Heart left ventricle (tissue), 16 donors: ENCODE measurements at regions of chr20 and their contacts with region 1.

Region 1: GRCh38 chr20:44196271-44196670 is 9.3 kb upstream of the JPH2 start:
- DNase-seq: no peak
- ATAC-seq: no peak
- H3K4me3 ChIP-seq: no peak overlapping the region
- H3K27ac ChIP-seq: no peak overlapping the region
- H3K4me1 ChIP-seq: peaks cover 0 to 20% (median 8%) of the 10 kb centered on the region in 12 donors
- H3K27me3 ChIP-seq: no peaks in the 10 kb centered on the region
- CTCF ChIP-seq: no peak
- POLR2A ChIP-seq: no peak

Region 2: GRCh38 chr20:44001667-44002596 is 194.3 kb before region 1 on chr20:
- intact Hi-C with region 1: no loop called
- DNase-seq: peak in 1 of 5 donors; percentile 2
- ATAC-seq: peak in 2 of 4 donors; percentile 34 to 40
- H3K4me3 ChIP-seq: no peak overlapping the region
- H3K27ac ChIP-seq: no peak overlapping the region
- H3K4me1 ChIP-seq: peaks cover 0 to 5% (median 0%) of the 10 kb centered on the region in 12 donors
- H3K27me3 ChIP-seq: peaks cover 0 to 9% (median 0%) of the 10 kb centered on the region in 9 donors
- CTCF ChIP-seq: no peak
- POLR2A ChIP-seq: no peak

Region 3: DNA sequence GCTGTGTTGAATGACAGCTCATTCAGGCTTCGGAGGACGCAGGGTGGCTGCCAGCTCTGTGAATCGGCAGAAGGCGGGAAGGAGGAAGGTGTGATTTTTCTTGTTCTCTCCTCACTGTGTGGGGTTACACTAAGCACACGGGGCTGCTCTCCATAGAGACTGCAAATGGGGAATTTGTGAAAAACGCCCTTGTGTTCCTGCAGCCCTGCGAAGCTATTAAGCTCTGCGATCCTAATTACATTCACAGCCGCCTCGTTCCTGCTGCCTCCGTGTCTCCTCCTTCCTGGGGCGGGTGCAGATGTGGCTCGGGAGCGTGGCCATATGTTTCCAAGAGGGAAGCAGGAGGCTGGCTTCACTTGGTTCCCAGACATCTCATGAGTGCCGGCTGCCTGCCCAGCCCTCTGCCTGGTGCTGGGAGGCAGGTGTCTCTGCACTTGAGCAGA is 157.6 kb before region 1 on chr20:
- intact Hi-C with region 1: no loop called
- DNase-seq: peak in 1 of 5 donors; percentile 21
- ATAC-seq: no peak
- H3K4me3 ChIP-seq: no peak overlapping the region
- H3K27ac ChIP-seq: no peak overlapping the region
- H3K4me1 ChIP-seq: peaks cover 0 to 3% (median 0%) of the 10 kb centered on the region in 12 donors
- H3K27me3 ChIP-seq: peaks cover 0 to 32% (median 8%) of the 10 kb centered on the region in 9 donors
- CTCF ChIP-seq: no peak
- POLR2A ChIP-seq: no peak

Region 4: DNA sequence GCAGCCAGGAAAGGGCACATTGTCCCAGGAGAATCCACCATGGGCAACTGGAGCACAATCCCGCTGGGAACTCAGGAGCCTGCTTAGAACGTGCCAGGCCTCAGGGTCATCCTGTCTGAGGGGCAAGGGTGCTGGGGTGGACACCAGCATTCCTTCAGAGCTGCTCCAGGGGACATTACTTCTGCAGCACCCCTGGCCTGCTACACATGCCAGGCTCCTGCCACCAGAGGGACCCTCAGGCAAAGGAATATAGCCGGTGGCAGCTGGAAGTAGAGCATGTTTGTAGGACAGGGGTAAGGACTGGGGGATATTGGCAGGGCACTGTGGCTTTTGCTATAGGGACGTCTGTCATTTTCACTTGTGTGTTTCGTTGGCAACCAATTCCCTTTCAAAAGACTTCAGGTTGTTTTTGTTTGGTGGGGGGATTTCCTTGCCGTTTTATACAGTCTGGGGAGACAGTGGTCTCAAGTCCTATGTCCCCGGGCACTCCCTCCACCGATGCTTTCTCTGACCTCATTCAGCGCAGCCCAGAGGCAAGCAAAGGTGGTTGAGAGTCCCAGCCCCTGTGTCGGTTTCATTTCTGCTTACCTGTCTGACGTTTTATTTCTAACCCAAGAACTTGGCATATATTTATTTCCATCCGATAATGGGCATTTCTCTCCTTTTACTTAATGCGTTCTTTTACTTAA is 140.1 kb before region 1 on chr20:
- intact Hi-C with region 1: loop called in 1 of 10 experiments (anchors 5 kb)
- DNase-seq: peak in 2 of 5 donors; percentile 48 to 58
- ATAC-seq: peak in 3 of 4 donors; percentile 75 to 93 (median 81)
- H3K4me3 ChIP-seq: no peak overlapping the region
- H3K27ac ChIP-seq: no peak overlapping the region
- H3K4me1 ChIP-seq: no peaks in the 10 kb centered on the region
- H3K27me3 ChIP-seq: no peaks in the 10 kb centered on the region
- CTCF ChIP-seq: peak; percentile 29 to 54 (median 40)
- POLR2A ChIP-seq: no peak

Region 5: DNA sequence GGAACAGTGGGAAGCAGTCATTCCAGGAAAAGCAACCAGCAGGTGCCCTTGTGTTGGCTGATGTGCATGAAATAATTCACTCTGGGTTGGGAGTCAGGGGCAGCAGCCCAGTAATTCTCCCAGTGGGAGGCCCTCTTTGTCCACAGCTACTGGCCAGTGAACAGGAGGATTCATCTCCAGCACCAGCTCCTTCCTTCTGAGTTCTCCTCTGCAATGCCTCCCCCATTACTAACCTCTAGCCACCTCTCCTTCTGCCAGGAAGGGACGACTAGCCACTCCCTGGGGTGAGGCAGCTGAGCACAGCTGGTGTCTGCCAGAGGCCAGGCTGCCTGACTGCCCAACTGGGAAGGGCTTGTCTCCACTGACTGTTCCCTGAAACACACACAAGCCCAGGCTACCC is 128.1 kb after region 1 on chr20:
- intact Hi-C with region 1: no loop called
- DNase-seq: no peak
- ATAC-seq: peak in 1 of 4 donors; percentile 48
- H3K4me3 ChIP-seq: no peak overlapping the region
- H3K27ac ChIP-seq: no peak overlapping the region
- H3K4me1 ChIP-seq: peaks cover 0 to 7% (median 0%) of the 10 kb centered on the region in 12 donors
- H3K27me3 ChIP-seq: peaks cover 0 to 16% (median 0%) of the 10 kb centered on the region in 9 donors
- CTCF ChIP-seq: no peak
- POLR2A ChIP-seq: no peak